Calu3 (cell line): ENCODE measurements at regions of chr10 and their contacts with region 1.

Region 1: GRCh38 chr10:91551856-91552255 is 81.0 kb downstream of the PPP1R3C start:
- DNase-seq: peak; percentile 27
- H3K4me3 Mint-ChIP-seq: no peak overlapping the region
- H3K27ac Mint-ChIP-seq: no peak overlapping the region
- H3K4me1 Mint-ChIP-seq: peaks cover 37% of the 10 kb centered on the region
- H3K27me3 Mint-ChIP-seq: no peaks in the 10 kb centered on the region
- CTCF ChIP-seq: peak; percentile 50

Region 2: GRCh38 chr10:91159254-91159783 is 392.5 kb before region 1 on chr10:
- CTCF ChIA-PET with region 1: no interaction called
- intact Hi-C with region 1: no loop called
- DNase-seq: no peak
- H3K4me3 Mint-ChIP-seq: no peak overlapping the region
- H3K27ac Mint-ChIP-seq: no peak overlapping the region
- H3K4me1 Mint-ChIP-seq: peaks cover 13% of the 10 kb centered on the region
- H3K27me3 Mint-ChIP-seq: peaks cover 20% of the 10 kb centered on the region
- CTCF ChIP-seq: no peak

Region 3: DNA sequence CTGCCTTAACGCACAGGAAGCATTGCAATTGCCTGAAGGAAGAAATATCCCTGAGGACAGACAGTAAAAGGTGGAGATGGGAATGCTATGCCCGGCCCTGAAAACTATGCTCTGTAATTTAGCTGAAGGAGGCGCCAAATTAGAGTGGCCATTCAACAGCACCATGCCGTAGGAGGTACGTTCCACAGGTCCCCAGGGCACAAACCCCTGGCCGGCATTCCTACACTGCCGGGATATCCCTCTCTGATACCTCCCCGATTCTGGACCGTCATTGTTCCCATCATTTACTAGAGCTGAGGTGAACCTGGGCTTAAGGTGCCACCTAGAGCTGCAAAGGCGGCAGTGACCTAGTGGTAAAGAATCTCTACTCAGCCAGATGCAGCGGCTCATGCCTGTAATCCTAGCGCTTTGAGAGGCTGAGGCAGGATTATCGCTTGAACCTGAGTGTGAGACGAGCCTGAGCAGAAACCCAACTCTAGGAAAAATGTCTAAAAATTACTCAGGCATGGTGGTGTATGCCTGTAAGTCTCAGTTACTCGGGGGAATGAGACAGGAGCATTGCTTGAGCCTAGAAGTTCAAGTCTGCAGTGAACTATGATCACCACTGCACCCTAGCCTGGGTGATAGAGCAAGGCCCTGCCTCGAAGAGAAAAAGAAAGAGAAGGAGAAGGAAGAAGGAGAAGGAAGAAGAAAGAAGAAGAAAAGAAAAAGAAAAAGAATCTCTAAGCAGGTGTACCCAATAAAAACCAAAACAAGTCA is 193.4 kb after region 1 on chr10:
- CTCF ChIA-PET with region 1: no interaction called
- intact Hi-C with region 1: loop called (anchors 10 kb)
- DNase-seq: peak; percentile 44
- H3K4me3 Mint-ChIP-seq: no peak overlapping the region
- H3K27ac Mint-ChIP-seq: no peak overlapping the region
- H3K4me1 Mint-ChIP-seq: no peaks in the 10 kb centered on the region
- H3K27me3 Mint-ChIP-seq: peaks cover 18% of the 10 kb centered on the region
- CTCF ChIP-seq: peak; percentile 20